Heart right ventricle (tissue), 16 donors: ENCODE measurements at regions of chr14 and their contacts with region 1.

Region 1: DNA sequence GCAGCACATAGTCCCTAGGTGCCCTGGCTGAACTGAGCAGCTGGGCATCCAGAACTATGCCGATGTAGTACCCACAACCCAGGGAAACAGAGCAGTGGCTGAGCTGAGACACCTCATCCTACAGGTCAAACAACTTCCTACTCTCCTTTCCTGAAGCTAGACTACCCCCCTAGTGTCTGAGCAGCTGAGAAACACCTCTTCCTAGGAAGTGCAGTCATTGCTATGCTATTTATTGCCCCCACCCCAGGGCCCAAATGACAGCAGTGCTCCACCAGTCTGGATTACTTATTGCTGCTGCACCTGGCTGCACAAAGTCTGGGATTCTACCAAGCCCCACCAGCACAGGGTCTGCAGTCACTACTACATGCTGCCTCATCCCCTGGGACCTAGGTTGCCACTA is 16.7 kb upstream of the GARIN2 start:
- DNase-seq: no peak
- ATAC-seq: no peak
- H3K4me3 ChIP-seq: no peak overlapping the region
- H3K27ac ChIP-seq: no peak overlapping the region
- H3K4me1 ChIP-seq: no peaks in the 10 kb centered on the region
- H3K27me3 ChIP-seq: no peaks in the 10 kb centered on the region
- CTCF ChIP-seq: no peak

Region 2: DNA sequence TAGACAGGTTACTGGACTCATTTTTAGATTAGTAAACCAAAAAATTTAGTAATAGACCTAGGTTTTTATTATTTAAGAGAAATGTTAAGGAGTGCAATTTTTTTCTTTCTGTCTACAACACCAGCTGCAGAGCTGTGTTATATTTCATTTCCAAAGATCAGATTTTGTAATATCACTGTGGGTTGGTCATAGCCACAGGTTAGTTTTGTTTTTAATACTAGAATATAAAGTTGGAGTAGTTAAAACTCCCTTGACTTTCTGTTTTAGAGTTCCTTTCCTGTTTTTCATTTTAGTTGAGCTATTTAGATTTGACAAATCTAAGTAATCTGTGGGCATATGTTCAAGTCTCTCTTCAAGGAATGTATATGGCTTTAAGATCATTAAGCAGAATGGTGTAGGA is 14.0 kb before region 1 on chr14:
- intact Hi-C with region 1: loop called in 1 of 10 experiments (anchors 1 kb)
- DNase-seq: no peak
- ATAC-seq: no peak
- H3K4me3 ChIP-seq: no peak overlapping the region
- H3K27ac ChIP-seq: no peak overlapping the region
- H3K4me1 ChIP-seq: no peaks in the 10 kb centered on the region
- H3K27me3 ChIP-seq: no peaks in the 10 kb centered on the region
- CTCF ChIP-seq: no peak